Activated naive CD4-positive, alpha-beta T cell treated with anti-CD3 and anti-CD28 coated beads for 36 hours (primary cell): ENCODE measurements at regions of chrX and their contacts with region 1.

Region 1: GRCh38 chrX:132631579-132632232 is 142.9 kb upstream of the MBNL3 start:
- DNase-seq: no peak
- H3K4me3 Mint-ChIP-seq: no peak overlapping the region
- H3K27ac Mint-ChIP-seq: no peak overlapping the region
- H3K4me1 Mint-ChIP-seq: no peaks in the 10 kb centered on the region
- H3K27me3 Mint-ChIP-seq: no peaks in the 10 kb centered on the region

Region 2: GRCh38 chrX:132576939-132577338 is 54.8 kb before region 1 on chrX:
- CTCF ChIA-PET with region 1: no interaction called
- intact Hi-C with region 1: no loop called
- DNase-seq: no peak
- H3K4me3 Mint-ChIP-seq: no peak overlapping the region
- H3K27ac Mint-ChIP-seq: no peak overlapping the region
- H3K4me1 Mint-ChIP-seq: peaks cover under 1% of the 10 kb centered on the region
- H3K27me3 Mint-ChIP-seq: no peaks in the 10 kb centered on the region

Region 3: GRCh38 chrX:132692066-132692465 is 60.4 kb after region 1 on chrX:
- CTCF ChIA-PET with region 1: no interaction called
- intact Hi-C with region 1: no loop called
- DNase-seq: no peak
- H3K4me3 Mint-ChIP-seq: no peak overlapping the region
- H3K27ac Mint-ChIP-seq: no peak overlapping the region
- H3K4me1 Mint-ChIP-seq: no peaks in the 10 kb centered on the region
- H3K27me3 Mint-ChIP-seq: peaks cover 2% of the 10 kb centered on the region

Region 4: DNA sequence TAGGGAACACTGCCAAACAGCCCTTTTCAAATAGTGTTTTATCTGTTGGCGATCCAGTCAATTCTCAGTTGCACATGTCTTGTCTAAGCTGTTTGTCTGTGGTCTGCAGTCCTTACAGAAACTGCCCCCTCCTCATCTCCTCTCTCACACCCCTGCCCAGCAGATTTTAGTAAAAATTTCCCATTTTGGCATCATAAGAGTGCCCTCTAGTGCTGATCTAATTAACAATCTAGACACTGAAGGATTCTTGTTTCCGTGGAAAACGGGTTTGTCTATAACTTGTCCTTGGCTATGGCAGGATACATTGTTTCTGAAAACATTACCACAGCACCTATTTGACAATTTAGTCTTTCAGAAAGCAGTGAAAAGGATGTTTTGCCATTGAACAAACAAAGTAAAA is 84.3 kb after region 1 on chrX:
- CTCF ChIA-PET with region 1: no interaction called
- intact Hi-C with region 1: loop called (anchors 2 kb)
- DNase-seq: no peak
- H3K4me3 Mint-ChIP-seq: no peak overlapping the region
- H3K27ac Mint-ChIP-seq: no peak overlapping the region
- H3K4me1 Mint-ChIP-seq: peaks cover 1% of the 10 kb centered on the region
- H3K27me3 Mint-ChIP-seq: no peaks in the 10 kb centered on the region

Region 5: DNA sequence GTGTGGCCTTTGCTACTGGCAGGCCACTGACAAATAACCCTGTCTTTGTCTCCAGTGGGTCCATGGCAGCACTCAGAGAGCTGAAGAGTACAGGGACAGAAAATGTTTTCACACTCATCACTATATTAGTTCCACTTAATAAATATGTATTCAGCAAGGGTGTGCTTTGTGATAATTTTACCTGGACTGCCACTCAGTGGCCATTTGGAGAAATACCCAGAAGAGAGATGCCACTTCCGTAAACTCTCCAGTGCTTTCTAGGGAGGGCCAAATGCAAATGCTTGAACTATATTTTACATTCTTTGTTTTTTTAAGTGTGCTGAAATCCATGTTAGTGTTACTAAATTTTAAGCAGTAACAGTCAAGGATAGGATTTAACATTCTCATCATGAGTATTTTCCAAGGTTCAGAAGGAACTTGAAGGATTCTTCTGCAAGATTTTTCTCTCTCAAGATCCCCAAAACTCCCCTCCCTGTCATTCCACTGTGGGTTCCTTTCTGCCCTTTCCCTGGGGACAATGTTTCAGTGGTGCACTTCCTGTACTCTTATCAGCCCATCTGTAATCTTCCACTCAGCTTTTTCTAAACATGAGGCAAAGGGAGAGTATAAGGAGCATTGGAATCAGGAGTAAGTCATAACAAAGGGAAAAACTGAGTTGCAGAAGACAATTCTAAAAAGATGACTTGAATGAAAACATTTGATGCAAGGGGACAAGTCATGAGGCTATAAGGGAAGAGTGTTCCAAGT is 540.4 kb after region 1 on chrX:
- CTCF ChIA-PET with region 1: no interaction called
- intact Hi-C with region 1: loop called (anchors 5 kb)
- DNase-seq: peak; percentile 4
- H3K4me3 Mint-ChIP-seq: no peak overlapping the region
- H3K27ac Mint-ChIP-seq: no peak overlapping the region
- H3K4me1 Mint-ChIP-seq: no peaks in the 10 kb centered on the region
- H3K27me3 Mint-ChIP-seq: peaks cover 2% of the 10 kb centered on the region

Region 6: GRCh38 chrX:133670383-133670782 is 1038.7 kb after region 1 on chrX:
- CTCF ChIA-PET with region 1: no interaction called
- intact Hi-C with region 1: loop called (anchors 10 kb)
- DNase-seq: peak; percentile 13
- H3K4me3 Mint-ChIP-seq: no peak overlapping the region
- H3K27ac Mint-ChIP-seq: no peak overlapping the region
- H3K4me1 Mint-ChIP-seq: no peaks in the 10 kb centered on the region
- H3K27me3 Mint-ChIP-seq: no peaks in the 10 kb centered on the region